Esophagus muscularis mucosa (tissue), 4 donors: ENCODE measurements at regions of chr5 and their contacts with region 1.

Region 1: DNA sequence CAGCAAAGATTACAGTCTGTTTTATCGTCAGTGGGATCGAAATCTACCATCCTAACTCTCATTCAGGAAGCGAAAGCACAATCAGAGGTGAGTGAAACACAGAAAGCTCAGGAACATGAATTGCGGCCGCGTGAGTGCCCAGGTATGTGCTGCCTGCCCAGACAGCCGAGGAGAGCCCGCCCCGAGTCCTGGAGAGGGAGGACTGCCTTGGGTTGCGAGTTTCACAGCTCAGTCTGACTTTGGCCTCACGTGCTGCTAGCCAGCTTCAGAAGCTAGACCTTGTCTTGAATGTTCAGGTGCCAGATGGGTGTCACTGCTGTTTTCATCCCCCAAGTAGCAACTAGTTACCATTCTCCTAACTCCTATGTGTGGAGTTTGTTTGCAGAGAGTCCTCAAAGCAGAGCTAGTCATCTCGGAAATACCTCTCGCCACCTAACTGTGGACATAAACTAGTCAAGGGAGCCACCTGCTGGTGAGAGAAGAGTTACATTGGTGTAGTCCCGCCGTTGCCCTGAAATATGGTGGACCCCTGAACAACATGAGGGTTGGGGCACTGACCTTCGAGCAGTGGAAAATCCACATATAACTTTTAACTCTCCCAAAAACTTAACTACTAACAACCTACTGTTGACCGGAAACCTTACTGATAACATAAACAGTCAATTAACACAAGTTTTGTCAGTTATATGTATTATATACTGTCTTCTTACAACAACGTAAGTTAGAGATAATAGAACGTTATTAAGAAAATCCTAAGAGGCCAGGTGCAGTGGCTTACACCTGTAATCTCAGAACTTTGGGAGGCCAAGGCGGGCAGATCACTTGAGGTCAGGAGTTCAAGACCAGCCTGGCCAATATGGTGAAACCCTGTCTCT is 80.9 kb downstream of the GOLPH3 start:
- DNase-seq: peak; percentile 91
- H3K4me3 ChIP-seq: no peak overlapping the region
- H3K27ac ChIP-seq: no peak overlapping the region
- H3K4me1 ChIP-seq: peaks cover 15 to 25% (median 21%) of the 10 kb centered on the region in 4 donors
- H3K27me3 ChIP-seq: no peaks in the 10 kb centered on the region
- CTCF ChIP-seq: peak; percentile 65 to 74 (median 71)
- EP300 ChIP-seq: no peak
- POLR2A ChIP-seq: no peak

Region 2: DNA sequence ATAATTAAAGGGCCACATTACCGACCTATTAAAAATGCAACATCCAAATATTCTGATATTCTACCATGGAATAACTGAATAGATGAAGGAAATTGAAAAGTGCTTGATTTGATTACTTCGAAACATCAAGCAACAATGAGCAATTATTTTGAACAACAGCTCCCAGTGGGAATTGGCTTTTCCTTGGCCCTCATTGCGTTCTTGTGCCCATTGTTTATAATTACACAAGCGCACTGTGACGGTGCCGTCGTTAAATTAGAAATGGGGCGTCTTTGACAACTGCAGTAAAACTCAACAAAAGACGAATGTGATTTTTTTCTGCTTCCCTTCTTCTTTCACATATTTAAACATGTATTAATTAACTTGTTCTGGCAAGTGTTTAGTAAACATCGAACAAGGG is 838.1 kb before region 1 on chr5:
- intact Hi-C with region 1: no loop called
- DNase-seq: no peak
- H3K4me3 ChIP-seq: no peak overlapping the region
- H3K27ac ChIP-seq: no peak overlapping the region
- H3K4me1 ChIP-seq: no peaks in the 10 kb centered on the region
- H3K27me3 ChIP-seq: no peaks in the 10 kb centered on the region
- CTCF ChIP-seq: no peak
- EP300 ChIP-seq: no peak
- POLR2A ChIP-seq: no peak

Region 3: GRCh38 chr5:31651241-31651640 is 441.9 kb before region 1 on chr5:
- intact Hi-C with region 1: no loop called
- DNase-seq: no peak
- H3K4me3 ChIP-seq: no peak overlapping the region
- H3K27ac ChIP-seq: no peak overlapping the region
- H3K4me1 ChIP-seq: peaks cover 0 to 18% (median 0%) of the 10 kb centered on the region in 4 donors
- H3K27me3 ChIP-seq: peaks cover 0 to 6% (median 0%) of the 10 kb centered on the region in 4 donors
- CTCF ChIP-seq: no peak
- EP300 ChIP-seq: no peak
- POLR2A ChIP-seq: no peak

Region 4: DNA sequence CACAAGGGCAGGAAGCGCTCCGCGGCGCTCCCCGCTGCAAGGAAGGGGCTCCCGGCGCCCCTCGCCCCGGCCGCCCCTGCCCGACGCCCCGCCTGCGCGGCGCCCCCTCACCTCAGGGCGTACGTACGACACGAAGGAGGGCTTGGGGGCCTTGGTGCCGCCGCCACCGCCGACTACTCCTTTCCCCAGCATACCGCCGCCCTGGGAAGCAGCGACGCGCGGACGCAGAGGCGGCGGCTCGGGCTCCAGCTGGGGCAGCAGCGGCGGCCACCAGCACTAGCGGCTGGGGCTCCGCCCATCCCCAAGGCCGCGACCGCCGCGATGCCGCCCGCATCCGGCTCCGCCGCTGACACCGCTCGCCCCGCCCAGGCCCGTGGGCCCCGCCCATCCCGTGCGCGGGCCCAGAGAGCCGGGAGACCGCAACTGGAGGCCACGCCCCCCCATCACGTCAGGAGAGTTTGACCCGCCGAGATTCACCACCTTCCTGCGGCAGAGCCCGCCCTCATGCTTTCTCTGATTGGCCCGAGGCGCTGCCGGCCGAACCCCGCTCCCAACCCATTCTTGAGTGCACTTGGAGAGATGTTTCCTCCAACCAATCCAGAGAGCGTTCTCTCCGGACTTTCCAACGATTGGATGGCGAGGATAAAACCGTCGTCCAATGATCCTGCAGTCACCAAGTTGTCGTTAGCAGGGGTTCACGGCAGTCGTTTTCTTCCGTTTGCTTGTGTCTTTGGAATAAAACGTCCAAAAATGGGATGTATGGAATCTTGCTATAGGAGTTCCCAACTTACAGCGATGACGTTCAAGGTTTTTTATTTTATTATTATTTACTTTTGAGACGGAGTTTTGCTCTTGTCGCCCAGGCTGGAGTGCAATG is 219.7 kb after region 1 on chr5 and contains the start of gene MTMR12:
- intact Hi-C with region 1: loop called (anchors 10 kb)
- DNase-seq: peak; percentile 100
- H3K4me3 ChIP-seq: peak within 1 kb of the TSS; percentile 61 to 99 (median 96)
- H3K27ac ChIP-seq: peak within 1 kb of the TSS; percentile 94 to 100 (median 99)
- H3K4me1 ChIP-seq: peaks cover 41 to 50% (median 47%) of the 10 kb centered on the region in 4 donors
- H3K27me3 ChIP-seq: no peaks in the 10 kb centered on the region
- CTCF ChIP-seq: no peak
- EP300 ChIP-seq: no peak
- POLR2A ChIP-seq: peak; percentile 68
- total RNA-seq, gene MTMR12: 49.9 to 94.0 (median 63.8) TPM

Region 5: DNA sequence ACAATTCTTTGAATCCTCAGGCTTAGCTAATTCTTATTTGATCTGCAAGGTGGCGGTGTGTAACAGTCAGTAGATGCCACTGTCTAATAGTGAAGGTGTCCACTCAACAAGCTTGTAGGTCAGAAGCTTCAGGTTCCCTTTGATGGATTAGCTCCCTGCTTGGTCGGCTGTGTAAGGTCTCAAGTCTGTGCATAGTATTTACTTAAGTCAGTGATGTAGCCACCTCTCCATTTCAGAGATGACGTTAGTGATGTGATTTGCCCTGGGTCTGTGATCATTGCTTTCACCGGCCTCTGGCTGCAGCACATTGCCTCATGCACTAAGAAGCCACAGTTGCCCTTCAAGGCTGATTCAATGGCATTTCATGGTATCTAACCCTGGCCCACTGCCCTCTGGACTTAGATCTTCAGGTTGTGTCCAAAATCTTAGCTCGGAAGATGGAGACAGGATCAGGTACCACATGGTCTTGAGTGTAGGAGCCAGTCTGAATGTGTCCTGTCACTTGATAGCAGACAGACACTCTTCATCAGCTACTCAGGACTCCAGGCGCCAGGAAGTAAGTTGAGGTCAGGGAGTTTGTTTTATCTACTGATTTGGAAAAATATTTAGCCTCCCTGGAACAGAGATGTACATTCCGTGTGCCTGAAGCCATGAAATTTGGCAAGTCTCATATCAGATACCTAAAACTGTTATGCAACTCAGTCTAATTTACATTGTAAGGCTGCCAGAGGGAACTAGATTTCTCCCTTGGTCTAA is 535.1 kb after region 1 on chr5:
- intact Hi-C with region 1: no loop called
- DNase-seq: no peak
- H3K4me3 ChIP-seq: no peak overlapping the region
- H3K27ac ChIP-seq: no peak overlapping the region
- H3K4me1 ChIP-seq: peaks cover 0 to 7% (median 0%) of the 10 kb centered on the region in 4 donors
- H3K27me3 ChIP-seq: no peaks in the 10 kb centered on the region
- CTCF ChIP-seq: no peak
- EP300 ChIP-seq: no peak
- POLR2A ChIP-seq: no peak